ENCODE measurements at regions of chr14 and their contacts with region 1.

Region 1: GRCh38 chr14:48504921-48505320 is 829.5 kb upstream of the MDGA2 start:
- DNase-seq: no peak

Region 2: GRCh38 chr14:48140804-48141203 is 364.1 kb before region 1 on chr14:
- intact Hi-C with region 1: loop called in 1 of 2 experiments (anchors 5 kb)
- DNase-seq: no peak

Measured in posterior vena cava (tissue), 2 donors.